AG04449 (cell line): ENCODE measurements at regions of chr17 and their contacts with region 1.

Region 1: DNA sequence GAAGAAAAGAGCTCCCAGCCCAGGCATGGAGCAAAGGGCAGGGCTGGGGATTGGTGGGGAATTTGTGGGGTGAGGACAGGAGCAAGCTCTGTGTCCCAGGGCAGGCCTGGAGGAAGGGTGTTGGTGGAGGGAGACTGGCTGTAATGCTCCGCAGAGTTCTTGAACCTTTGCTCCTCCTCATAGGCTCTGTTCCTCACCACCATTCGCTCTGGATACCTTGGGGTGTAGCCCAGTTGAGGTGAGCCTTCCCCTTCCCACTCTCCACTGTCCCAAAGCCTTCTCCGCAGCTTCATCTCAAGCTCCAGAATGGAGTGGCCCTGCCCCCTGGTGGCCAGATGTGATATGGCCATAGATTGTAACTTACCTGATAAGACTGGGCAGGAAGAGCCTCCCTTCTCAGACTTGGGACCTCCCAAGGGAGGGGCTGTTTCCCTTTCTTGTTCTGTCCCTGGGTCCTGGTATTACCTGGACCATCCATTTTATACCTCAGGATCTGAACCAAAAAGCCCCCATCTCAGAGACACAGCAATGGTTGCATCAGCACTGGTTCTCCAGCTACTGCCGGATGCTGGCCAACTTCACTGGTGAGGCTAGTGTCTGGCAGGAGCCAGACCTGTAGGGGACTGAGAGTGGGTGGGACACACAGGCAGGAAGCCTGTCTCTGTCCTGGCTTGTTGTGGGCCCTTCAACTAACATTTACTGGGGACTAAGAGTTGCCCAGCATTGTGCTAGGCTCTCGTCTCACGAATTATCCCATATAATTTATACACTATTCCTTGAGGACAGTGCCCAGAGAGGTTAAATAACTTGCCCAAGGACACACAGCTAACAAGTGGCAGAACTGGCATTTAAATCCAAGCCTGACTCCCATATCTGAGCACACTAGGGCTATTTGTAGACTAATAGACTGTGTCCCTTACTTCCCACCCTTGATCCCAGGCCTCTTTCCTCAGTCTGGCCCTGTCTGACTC is 19.1 kb upstream of the STAC2 start:
- DNase-seq: no peak
- H3K4me3 ChIP-seq: no peak overlapping the region
- CTCF ChIP-seq: peak; percentile 90

Region 2: GRCh38 chr17:39174907-39175694 is 69.8 kb before region 1 on chr17:
- CTCF ChIA-PET with region 1: interaction called, 19 read pairs
- POLR2A ChIA-PET with region 1: no interaction called
- DNase-seq: no peak
- H3K4me3 ChIP-seq: no peak overlapping the region
- CTCF ChIP-seq: peak; percentile 87

Region 3: GRCh38 chr17:39199820-39200069 is 45.1 kb before region 1 on chr17:
- CTCF ChIA-PET with region 1: interaction called, 429 read pairs
- POLR2A ChIA-PET with region 1: interaction called, 5 read pairs
- DNase-seq: peak; percentile 73
- H3K4me3 ChIP-seq: peak overlapping the region; percentile 95
- CTCF ChIP-seq: no peak

Region 4: GRCh38 chr17:39225959-39226683 is 18.8 kb before region 1 on chr17:
- CTCF ChIA-PET with region 1: interaction called, 221 read pairs
- POLR2A ChIA-PET with region 1: interaction called, 3 read pairs
- DNase-seq: no peak
- H3K4me3 ChIP-seq: peak overlapping the region; percentile 48
- CTCF ChIP-seq: no peak

Region 5: GRCh38 chr17:39270923-39271322 is 26.0 kb after region 1 on chr17:
- CTCF ChIA-PET with region 1: interaction called, 22 read pairs
- POLR2A ChIA-PET with region 1: no interaction called
- DNase-seq: peak; percentile 69
- H3K4me3 ChIP-seq: no peak overlapping the region
- CTCF ChIP-seq: peak; percentile 56